Heart right ventricle (tissue), 16 donors: ENCODE measurements at regions of chr12 and their contacts with region 1.

Region 1: GRCh38 chr12:124694846-124695497 is 127.6 kb upstream of the NCOR2 start:
- DNase-seq: peak; percentile 62 to 74
- ATAC-seq: peak; percentile 65 to 90 (median 76)
- H3K4me3 ChIP-seq: peak overlapping the region in 2 of 10 donors; percentile 2 to 3
- H3K27ac ChIP-seq: peak overlapping the region; percentile 50 to 88 (median 78)
- H3K4me1 ChIP-seq: peaks cover 0 to 58% (median 27%) of the 10 kb centered on the region in 9 donors
- H3K27me3 ChIP-seq: no peaks in the 10 kb centered on the region
- CTCF ChIP-seq: peak in 3 of 9 donors; percentile 12 to 36 (median 12)

Region 2: GRCh38 chr12:124620751-124621660 is 74.0 kb before region 1 on chr12:
- intact Hi-C with region 1: loop called in 2 of 10 experiments (anchors 5 kb)
- DNase-seq: peak; percentile 61 to 70
- ATAC-seq: peak; percentile 34 to 77 (median 69)
- H3K4me3 ChIP-seq: no peak overlapping the region
- H3K27ac ChIP-seq: peak overlapping the region in 7 of 10 donors; percentile 22 to 74 (median 50)
- H3K4me1 ChIP-seq: peaks cover 3 to 51% (median 26%) of the 10 kb centered on the region in 9 donors
- H3K27me3 ChIP-seq: no peaks in the 10 kb centered on the region
- CTCF ChIP-seq: no peak

Region 3: DNA sequence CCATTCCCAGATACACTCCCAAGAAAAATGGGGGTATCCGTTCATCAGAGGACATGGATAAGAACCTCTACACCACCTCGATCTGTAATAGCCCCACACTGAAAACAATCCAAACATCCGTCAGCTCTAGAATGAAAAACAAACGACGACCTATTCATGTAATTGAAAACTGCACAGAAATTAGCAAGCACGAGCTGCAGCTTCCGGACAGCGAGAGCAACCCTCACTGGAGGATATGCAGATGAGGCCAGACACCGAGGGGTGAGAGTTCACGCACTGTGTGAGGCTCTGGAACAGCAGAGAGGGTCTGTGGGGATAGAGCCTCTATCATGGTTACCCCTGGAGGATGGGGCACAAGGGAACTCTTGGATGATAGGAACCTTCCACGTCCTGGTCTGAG is 16.4 kb after region 1 on chr12:
- intact Hi-C with region 1: loop called in 1 of 10 experiments (anchors 1 kb)
- DNase-seq: no peak
- ATAC-seq: no peak
- H3K4me3 ChIP-seq: no peak overlapping the region
- H3K27ac ChIP-seq: no peak overlapping the region
- H3K4me1 ChIP-seq: peaks cover 0 to 46% (median 11%) of the 10 kb centered on the region in 9 donors
- H3K27me3 ChIP-seq: no peaks in the 10 kb centered on the region
- CTCF ChIP-seq: no peak

Region 4: GRCh38 chr12:124745891-124746570 is 51.1 kb after region 1 on chr12:
- intact Hi-C with region 1: loop called in 3 of 10 experiments (anchors 5 kb)
- DNase-seq: peak; percentile 92 to 95
- ATAC-seq: peak; percentile 95 to 97 (median 96)
- H3K4me3 ChIP-seq: peak overlapping the region in 5 of 10 donors; percentile 4 to 24 (median 7)
- H3K27ac ChIP-seq: peak overlapping the region; percentile 59 to 91 (median 88)
- H3K4me1 ChIP-seq: peaks cover 6 to 42% (median 22%) of the 10 kb centered on the region in 9 donors
- H3K27me3 ChIP-seq: no peaks in the 10 kb centered on the region
- CTCF ChIP-seq: no peak